ENCODE measurements at regions of chr20 and their contacts with region 1.

Region 1: GRCh38 chr20:31822421-31823330 is 3.5 kb downstream of the MYLK2 start:
- DNase-seq: peak; percentile 29
- H3K4me3 ChIP-seq: no peak overlapping the region
- H3K27ac ChIP-seq: no peak overlapping the region
- H3K4me1 ChIP-seq: no peaks in the 10 kb centered on the region
- H3K27me3 ChIP-seq: no peaks in the 10 kb centered on the region
- CTCF ChIP-seq: peak; percentile 78 to 96

Region 2: GRCh38 chr20:32031007-32031958 is 208.6 kb after region 1 on chr20:
- CTCF ChIA-PET with region 1: no interaction called
- dilution Hi-C with region 1: no loop called
- in situ Hi-C with region 1: no loop called
- intact Hi-C with region 1: loop called (anchors 1 kb)
- DNase-seq: peak; percentile 66
- H3K4me3 ChIP-seq: peak overlapping the region in 1 of 3 experiments; percentile 23
- H3K27ac ChIP-seq: no peak overlapping the region
- H3K4me1 ChIP-seq: peaks cover 5% of the 10 kb centered on the region
- H3K27me3 ChIP-seq: peaks cover 3% of the 10 kb centered on the region
- CTCF ChIP-seq: peak; percentile 72 to 88

Region 3: GRCh38 chr20:32037929-32038328 is 215.3 kb after region 1 on chr20:
- CTCF ChIA-PET with region 1: interaction called, 10 read pairs
- dilution Hi-C with region 1: no loop called
- in situ Hi-C with region 1: no loop called
- intact Hi-C with region 1: no loop called
- DNase-seq: peak; percentile 39
- H3K4me3 ChIP-seq: no peak overlapping the region
- H3K27ac ChIP-seq: no peak overlapping the region
- H3K4me1 ChIP-seq: peaks cover 6% of the 10 kb centered on the region
- H3K27me3 ChIP-seq: no peaks in the 10 kb centered on the region
- CTCF ChIP-seq: no peak

Region 4: GRCh38 chr20:32067234-32067821 is 244.7 kb after region 1 on chr20:
- CTCF ChIA-PET with region 1: no interaction called
- dilution Hi-C with region 1: no loop called
- in situ Hi-C with region 1: no loop called
- intact Hi-C with region 1: no loop called
- DNase-seq: peak; percentile 14
- H3K4me3 ChIP-seq: no peak overlapping the region
- H3K27ac ChIP-seq: no peak overlapping the region
- H3K4me1 ChIP-seq: no peaks in the 10 kb centered on the region
- H3K27me3 ChIP-seq: no peaks in the 10 kb centered on the region
- CTCF ChIP-seq: no peak

Measured in mammary epithelial cell (primary cell).